ENCODE measurements at regions of chr19 and their contacts with region 1.

Region 1: GRCh38 chr19:49850473-49851342 is at the start of gene PTOV1:
- DNase-seq: peak; percentile 81
- H3K4me3 ChIP-seq: peak within 1 kb of the TSS; percentile 76 to 95 (median 95)
- H3K27ac ChIP-seq: peak within 1 kb of the TSS; percentile 79
- H3K4me1 ChIP-seq: peaks cover 42% of the 10 kb centered on the region
- H3K27me3 ChIP-seq: no peaks in the 10 kb centered on the region
- CTCF ChIP-seq: no peak
- total RNA-seq, gene PTOV1: 28.8 to 85.6 TPM

Region 2: GRCh38 chr19:49546825-49547565 is 303.7 kb before region 1 on chr19:
- CTCF ChIA-PET with region 1: no interaction called
- dilution Hi-C with region 1: no loop called
- in situ Hi-C with region 1: no loop called
- intact Hi-C with region 1: no loop called
- DNase-seq: peak; percentile 72
- H3K4me3 ChIP-seq: no peak overlapping the region
- H3K27ac ChIP-seq: no peak overlapping the region
- H3K4me1 ChIP-seq: no peaks in the 10 kb centered on the region
- H3K27me3 ChIP-seq: no peaks in the 10 kb centered on the region
- CTCF ChIP-seq: peak; percentile 81 to 85

Region 3: GRCh38 chr19:49869441-49870176 is 18.9 kb after region 1 on chr19:
- CTCF ChIA-PET with region 1: no interaction called
- dilution Hi-C with region 1: no loop called
- in situ Hi-C with region 1: no loop called
- intact Hi-C with region 1: loop called (anchors 1 kb)
- DNase-seq: peak; percentile 100
- H3K4me3 ChIP-seq: peak overlapping the region; percentile 28 to 55 (median 48)
- H3K27ac ChIP-seq: peak overlapping the region; percentile 35
- H3K4me1 ChIP-seq: peaks cover 30% of the 10 kb centered on the region
- H3K27me3 ChIP-seq: no peaks in the 10 kb centered on the region
- CTCF ChIP-seq: no peak

Measured in mammary epithelial cell (primary cell).